Activated T-helper 1 cell treated with anti-CD3 and anti-CD28 coated beads, Interleukin-12 subunit alpha, Interleukin-12 subunit beta, Interleukin-2, Interleukin-4 antibody, amounts not matched to agents 30 ng/mL and 10 ng/mL and 1 ng/mL, durations not matched to agents 14 hours and 24 hours and 36 hours (primary cell): ENCODE measurements at regions of chr7 and their contacts with region 1.

Region 1: GRCh38 chr7:31892099-31892829 is 177.9 kb downstream of the PDE1C start:
- DNase-seq: no peak
- H3K4me3 Mint-ChIP-seq: no peak overlapping the region
- H3K27ac Mint-ChIP-seq: no peak overlapping the region
- H3K4me1 Mint-ChIP-seq: no peaks in the 10 kb centered on the region
- H3K27me3 Mint-ChIP-seq: no peaks in the 10 kb centered on the region

Region 2: DNA sequence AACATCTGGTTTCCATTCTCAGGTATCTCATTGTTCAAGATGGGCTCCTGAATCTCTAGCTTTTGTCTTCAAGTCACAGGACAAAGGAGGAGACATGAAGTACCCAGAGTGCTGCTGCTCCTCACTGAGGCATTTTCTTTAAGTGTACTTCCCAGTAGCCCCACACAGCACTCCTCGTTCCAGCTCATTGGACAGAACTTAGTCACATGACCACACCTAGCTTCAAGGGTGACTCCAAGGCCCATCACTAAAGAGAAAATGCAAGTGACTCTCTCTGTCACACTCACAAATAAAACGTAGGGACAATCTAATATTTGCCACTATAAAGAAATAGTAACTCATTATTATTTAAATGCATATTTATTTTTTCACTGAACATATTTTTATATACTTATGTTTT is 493.4 kb before region 1 on chr7:
- intact Hi-C with region 1: no loop called
- DNase-seq: no peak
- H3K4me3 Mint-ChIP-seq: no peak overlapping the region
- H3K27ac Mint-ChIP-seq: no peak overlapping the region
- H3K4me1 Mint-ChIP-seq: no peaks in the 10 kb centered on the region
- H3K27me3 Mint-ChIP-seq: no peaks in the 10 kb centered on the region

Region 3: GRCh38 chr7:31805209-31805818 is 87.0 kb before region 1 on chr7:
- intact Hi-C with region 1: loop called (anchors 10 kb)
- DNase-seq: no peak
- H3K4me3 Mint-ChIP-seq: no peak overlapping the region
- H3K27ac Mint-ChIP-seq: no peak overlapping the region
- H3K4me1 Mint-ChIP-seq: no peaks in the 10 kb centered on the region
- H3K27me3 Mint-ChIP-seq: no peaks in the 10 kb centered on the region